ENCODE measurements at regions of chr2 and their contacts with region 1.

Region 1: DNA sequence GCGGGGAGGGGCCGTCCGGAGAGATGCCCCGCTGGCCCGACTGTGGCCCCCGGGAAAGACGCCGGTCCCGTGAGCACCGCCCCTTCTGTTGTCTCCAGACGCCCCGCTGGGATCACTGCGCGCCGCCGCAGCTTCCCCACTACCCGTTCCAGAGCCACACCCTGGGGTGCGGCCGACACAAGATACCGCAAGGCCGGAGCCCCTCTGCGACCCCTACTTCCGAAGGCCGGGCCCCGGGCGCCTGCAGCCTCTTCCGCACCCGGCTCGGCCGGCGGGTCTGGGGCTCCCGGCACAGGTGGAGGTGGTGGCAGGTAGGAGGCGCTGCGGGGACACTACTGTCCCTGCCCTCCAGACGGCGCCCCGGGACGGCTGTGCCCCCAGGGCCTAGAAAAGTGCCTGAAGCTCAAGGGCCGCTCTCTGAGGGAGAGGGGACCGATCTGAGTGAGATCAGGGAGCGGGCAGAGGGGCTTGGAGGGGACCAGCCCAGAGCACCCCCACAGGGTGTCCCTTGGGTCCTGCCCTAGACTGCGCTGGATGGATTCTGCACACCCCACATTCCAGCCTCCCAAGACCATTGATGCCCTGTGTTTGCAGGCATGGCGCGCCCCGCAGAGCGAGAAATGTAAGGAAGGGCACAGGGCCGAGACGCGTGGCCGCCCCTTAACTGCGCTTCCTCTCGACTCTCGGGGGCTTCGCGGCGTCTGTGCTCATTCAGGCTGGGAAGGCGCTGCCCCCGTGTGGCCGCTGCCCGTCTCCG is 80.0 kb downstream of the GFPT1 start:
- DNase-seq: peak; percentile 59
- H3K4me3 ChIP-seq: peak overlapping the region; percentile 37
- H3K27ac ChIP-seq: no peak overlapping the region
- H3K4me1 ChIP-seq: no peaks in the 10 kb centered on the region
- CTCF ChIP-seq: peak; percentile 72

Region 2: GRCh38 chr2:68943581-68944568 is 363.1 kb before region 1 on chr2:
- CTCF ChIA-PET with region 1: no interaction called
- POLR2A ChIA-PET with region 1: no interaction called
- intact Hi-C with region 1: loop called (anchors 2 kb)
- DNase-seq: peak; percentile 69
- H3K4me3 ChIP-seq: no peak overlapping the region
- H3K27ac ChIP-seq: no peak overlapping the region
- H3K4me1 ChIP-seq: no peaks in the 10 kb centered on the region
- CTCF ChIP-seq: peak; percentile 89

Region 3: DNA sequence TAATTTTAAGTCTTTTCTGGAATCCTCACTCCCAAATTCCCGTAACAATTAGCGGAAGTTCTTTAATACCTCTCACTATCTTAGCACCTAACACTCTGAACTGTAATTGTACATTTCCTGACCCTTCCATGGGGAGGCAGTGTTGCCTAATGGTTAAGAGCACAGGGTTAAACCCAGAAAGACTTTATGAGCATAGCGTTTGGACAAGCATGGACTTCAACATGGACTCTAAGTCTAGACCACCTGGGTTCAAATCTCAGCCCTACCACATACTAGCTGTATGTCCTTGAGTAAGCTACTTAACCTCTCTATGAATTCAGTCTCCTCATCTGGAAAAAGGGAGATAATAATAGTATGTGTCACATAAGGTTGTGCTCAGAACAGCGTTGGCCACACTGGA is 281.0 kb before region 1 on chr2:
- CTCF ChIA-PET with region 1: no interaction called
- POLR2A ChIA-PET with region 1: no interaction called
- intact Hi-C with region 1: loop called (anchors 5 kb)
- DNase-seq: peak; percentile 34
- H3K4me3 ChIP-seq: no peak overlapping the region
- H3K27ac ChIP-seq: no peak overlapping the region
- H3K4me1 ChIP-seq: no peaks in the 10 kb centered on the region
- CTCF ChIP-seq: peak; percentile 81

Region 4: DNA sequence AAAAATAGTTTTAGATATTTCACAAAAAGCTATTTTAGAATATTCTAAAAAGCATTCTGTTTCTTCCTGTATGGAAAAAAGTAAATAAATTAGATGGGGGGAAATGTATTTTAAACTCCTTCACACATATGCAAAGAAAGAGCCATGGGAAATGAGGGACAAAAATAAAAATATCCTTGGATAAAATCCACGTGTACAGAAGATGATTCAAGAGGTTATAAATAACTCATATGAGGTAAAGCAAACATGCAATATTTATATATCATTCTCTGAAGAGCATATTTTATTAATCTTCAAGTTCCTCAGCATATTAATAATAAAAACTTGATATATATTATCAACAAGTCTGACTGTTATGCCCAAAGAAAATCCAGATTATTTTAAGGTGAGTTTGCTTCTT is 88.9 kb after region 1 on chr2:
- CTCF ChIA-PET with region 1: no interaction called
- POLR2A ChIA-PET with region 1: no interaction called
- intact Hi-C with region 1: no loop called
- DNase-seq: no peak
- H3K4me3 ChIP-seq: no peak overlapping the region
- H3K27ac ChIP-seq: no peak overlapping the region
- H3K4me1 ChIP-seq: no peaks in the 10 kb centered on the region
- CTCF ChIP-seq: no peak